ENCODE measurements at regions of chr19 and their contacts with region 1.

Region 1: GRCh38 chr19:11380653-11381534 is 3.2 kb downstream of the EPOR start:
- DNase-seq: peak; percentile 88 to 99 (median 98)
- ATAC-seq: peak; percentile 90
- H3K4me3 ChIP-seq: peak overlapping the region; percentile 69
- H3K4me3 Mint-ChIP-seq: peak overlapping the region; percentile 86 to 99 (median 93)
- H3K27ac ChIP-seq: peak overlapping the region; percentile 86
- H3K27ac Mint-ChIP-seq: peak overlapping the region; percentile 91 to 99 (median 98)
- H3K4me1 ChIP-seq: peaks cover 33 to 44% of the 10 kb centered on the region in 2 donors
- H3K4me1 Mint-ChIP-seq: peaks cover 36 to 65% (median 52%) of the 10 kb centered on the region in 7 donors
- H3K27me3 ChIP-seq: no peaks in the 10 kb centered on the region
- H3K27me3 Mint-ChIP-seq: peaks cover 0 to 35% (median 5%) of the 10 kb centered on the region in 5 donors

Region 2: GRCh38 chr19:11155373-11156120 is 225.3 kb before region 1 on chr19 and contains the start of gene SPC24:
- CTCF ChIA-PET with region 1: no interaction called
- POLR2A ChIA-PET with region 1: interaction called, 3 read pairs
- intact Hi-C with region 1: loop called in 1 of 2 experiments (anchors 2 kb)
- DNase-seq: peak; percentile 70 to 93 (median 90)
- ATAC-seq: peak; percentile 98
- H3K4me3 ChIP-seq: peak within 1 kb of the TSS; percentile 71
- H3K4me3 Mint-ChIP-seq: peak within 1 kb of the TSS; percentile 79 to 94 (median 89)
- H3K27ac ChIP-seq: peak within 1 kb of the TSS; percentile 16
- H3K27ac Mint-ChIP-seq: peak within 1 kb of the TSS; percentile 54 to 92 (median 83)
- H3K4me1 ChIP-seq: peaks cover 6 to 15% of the 10 kb centered on the region in 2 donors
- H3K4me1 Mint-ChIP-seq: peaks cover 7 to 30% (median 15%) of the 10 kb centered on the region in 7 donors
- H3K27me3 ChIP-seq: no peaks in the 10 kb centered on the region
- H3K27me3 Mint-ChIP-seq: no peaks in the 10 kb centered on the region
- total RNA-seq, gene SPC24: 0.56 to 45.4 (median 1.9) TPM

Region 3: GRCh38 chr19:11367528-11367927 is 13.4 kb before region 1 on chr19:
- CTCF ChIA-PET with region 1: interaction called, 4 read pairs
- POLR2A ChIA-PET with region 1: interaction called, 11 read pairs
- intact Hi-C with region 1: no loop called
- DNase-seq: no peak
- ATAC-seq: no peak
- H3K4me3 ChIP-seq: no peak overlapping the region
- H3K4me3 Mint-ChIP-seq: no peak overlapping the region
- H3K27ac ChIP-seq: no peak overlapping the region
- H3K27ac Mint-ChIP-seq: peak overlapping the region in 1 of 9 donors; percentile 53
- H3K4me1 ChIP-seq: no peaks in the 10 kb centered on the region
- H3K4me1 Mint-ChIP-seq: peaks cover 0 to 4% (median 0%) of the 10 kb centered on the region in 7 donors
- H3K27me3 ChIP-seq: no peaks in the 10 kb centered on the region
- H3K27me3 Mint-ChIP-seq: no peaks in the 10 kb centered on the region

Region 4: GRCh38 chr19:11435058-11435832 is 54.4 kb after region 1 on chr19 and contains the starts of genes ODAD3 and PRKCSH:
- CTCF ChIA-PET with region 1: interaction called, 7 read pairs
- POLR2A ChIA-PET with region 1: interaction called, 24 read pairs
- intact Hi-C with region 1: loop called (anchors 1 kb)
- DNase-seq: peak; percentile 90 to 99 (median 97)
- ATAC-seq: peak; percentile 97
- H3K4me3 ChIP-seq: peak within 1 kb of the TSS; percentile 77
- H3K4me3 Mint-ChIP-seq: peak within 1 kb of the TSS; percentile 96 to 100 (median 99)
- H3K27ac ChIP-seq: peak within 1 kb of the TSS; percentile 77
- H3K27ac Mint-ChIP-seq: peak within 1 kb of the TSS; percentile 91 to 98 (median 97)
- H3K4me1 ChIP-seq: peaks cover 13 to 16% of the 10 kb centered on the region in 2 donors
- H3K4me1 Mint-ChIP-seq: peaks cover 10 to 34% (median 24%) of the 10 kb centered on the region in 7 donors
- H3K27me3 ChIP-seq: no peaks in the 10 kb centered on the region
- H3K27me3 Mint-ChIP-seq: peaks cover 0 to 8% (median 0%) of the 10 kb centered on the region in 5 donors
- total RNA-seq, gene ODAD3: not detected
- total RNA-seq, gene PRKCSH: 254 to 332 (median 288) TPM

Region 5: DNA sequence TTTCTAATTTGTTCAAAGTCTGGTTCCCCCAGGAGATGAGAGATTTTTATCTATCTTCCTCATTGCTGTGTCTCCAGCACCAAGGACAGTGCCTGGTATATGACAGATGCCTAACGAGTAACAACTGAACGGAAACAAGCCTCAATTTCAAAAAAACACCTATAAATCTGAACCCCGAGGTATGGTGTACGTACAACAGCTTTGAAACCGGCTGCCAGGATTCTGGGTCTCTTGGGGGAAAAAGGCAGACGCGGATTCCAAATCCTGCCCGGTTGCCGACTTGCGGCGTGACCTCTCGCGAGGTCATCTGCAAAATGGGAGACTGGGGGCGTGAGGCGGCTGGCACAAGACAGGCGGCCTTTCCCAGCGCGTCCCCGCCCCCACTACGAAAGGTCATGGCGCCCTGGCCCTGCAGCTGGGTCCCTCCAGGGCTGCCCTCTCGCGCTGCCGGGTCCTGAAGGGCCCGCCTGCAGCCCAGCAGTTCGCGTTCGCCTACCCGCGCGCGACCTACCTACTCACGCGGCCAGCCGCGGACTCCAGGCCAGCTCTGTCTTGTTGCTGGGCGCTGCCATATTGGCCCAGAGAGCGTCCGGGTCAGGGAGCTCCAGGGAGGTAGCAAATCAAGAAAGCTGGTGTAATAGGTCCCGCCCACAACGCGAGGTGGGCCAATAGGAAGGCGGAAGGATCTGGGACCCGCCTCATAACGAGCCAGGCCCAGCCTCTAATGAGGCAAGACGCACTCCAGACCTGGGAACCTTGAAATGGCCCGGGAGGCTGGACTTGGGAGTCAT is 147.9 kb after region 1 on chr19 and contains the start of gene ECSIT:
- CTCF ChIA-PET with region 1: no interaction called
- POLR2A ChIA-PET with region 1: interaction called, 11 read pairs
- intact Hi-C with region 1: loop called in 1 of 2 experiments (anchors 2 kb)
- DNase-seq: peak; percentile 78 to 93 (median 89)
- ATAC-seq: peak; percentile 99
- H3K4me3 ChIP-seq: peak within 1 kb of the TSS; percentile 90
- H3K4me3 Mint-ChIP-seq: peak within 1 kb of the TSS; percentile 89 to 99 (median 96)
- H3K27ac ChIP-seq: peak within 1 kb of the TSS; percentile 77
- H3K27ac Mint-ChIP-seq: peak within 1 kb of the TSS; percentile 85 to 96 (median 94)
- H3K4me1 ChIP-seq: peaks cover 8 to 10% of the 10 kb centered on the region in 2 donors
- H3K4me1 Mint-ChIP-seq: peaks cover 12 to 27% (median 21%) of the 10 kb centered on the region in 7 donors
- H3K27me3 ChIP-seq: no peaks in the 10 kb centered on the region
- H3K27me3 Mint-ChIP-seq: no peaks in the 10 kb centered on the region
- total RNA-seq, gene ECSIT: 25.8 to 50.3 (median 32.5) TPM

Region 6: GRCh38 chr19:11570039-11570462 is 189.2 kb after region 1 on chr19:
- CTCF ChIA-PET with region 1: no interaction called
- POLR2A ChIA-PET with region 1: no interaction called
- intact Hi-C with region 1: no loop called
- DNase-seq: no peak
- ATAC-seq: no peak
- H3K4me3 ChIP-seq: no peak overlapping the region
- H3K4me3 Mint-ChIP-seq: no peak overlapping the region
- H3K27ac ChIP-seq: no peak overlapping the region
- H3K27ac Mint-ChIP-seq: no peak overlapping the region
- H3K4me1 ChIP-seq: no peaks in the 10 kb centered on the region
- H3K4me1 Mint-ChIP-seq: peaks cover 0 to 6% (median 0%) of the 10 kb centered on the region in 7 donors
- H3K27me3 ChIP-seq: no peaks in the 10 kb centered on the region
- H3K27me3 Mint-ChIP-seq: no peaks in the 10 kb centered on the region

Region 7: GRCh38 chr19:12346896-12347295 is 966.0 kb after region 1 on chr19:
- CTCF ChIA-PET with region 1: no interaction called
- POLR2A ChIA-PET with region 1: no interaction called
- intact Hi-C with region 1: no loop called
- DNase-seq: peak in 5 of 9 donors; percentile 19 to 52 (median 32)
- ATAC-seq: peak; percentile 68
- H3K4me3 ChIP-seq: no peak overlapping the region
- H3K4me3 Mint-ChIP-seq: no peak overlapping the region
- H3K27ac ChIP-seq: no peak overlapping the region
- H3K27ac Mint-ChIP-seq: peak overlapping the region in 1 of 9 donors; percentile 36
- H3K4me1 ChIP-seq: no peaks in the 10 kb centered on the region
- H3K4me1 Mint-ChIP-seq: peaks cover 0 to 2% (median 0%) of the 10 kb centered on the region in 7 donors
- H3K27me3 ChIP-seq: no peaks in the 10 kb centered on the region
- H3K27me3 Mint-ChIP-seq: no peaks in the 10 kb centered on the region

Measured in naive thymus-derived CD4-positive, alpha-beta T cell (primary cell).